Common myeloid progenitor, CD34-positive (primary cell): ENCODE measurements at regions of chr11 and their contacts with region 1.

Region 1: GRCh38 chr11:64304316-64305072 is 830 bp upstream of the ESRRA start:
- DNase-seq: peak; percentile 90 to 94 (median 91)
- H3K4me3 ChIP-seq: peak overlapping the region; percentile 52 to 92 (median 78)
- H3K27ac ChIP-seq: peak overlapping the region; percentile 40 to 82
- H3K4me1 ChIP-seq: peaks cover 7 to 44% (median 40%) of the 10 kb centered on the region in 4 experiments
- H3K27me3 ChIP-seq: peaks cover 0 to 20% (median 13%) of the 10 kb centered on the region in 5 experiments

Region 2: GRCh38 chr11:63993993-63994392 is 310.5 kb before region 1 on chr11:
- CTCF ChIA-PET with region 1: no interaction called
- POLR2A ChIA-PET with region 1: no interaction called
- DNase-seq: no peak
- H3K4me3 ChIP-seq: no peak overlapping the region
- H3K27ac ChIP-seq: no peak overlapping the region
- H3K4me1 ChIP-seq: peaks cover 0 to 12% (median 7%) of the 10 kb centered on the region in 4 experiments
- H3K27me3 ChIP-seq: peaks cover 0 to 12% (median 0%) of the 10 kb centered on the region in 5 experiments

Region 3: GRCh38 chr11:64131683-64132190 is 172.8 kb before region 1 on chr11:
- CTCF ChIA-PET with region 1: no interaction called
- POLR2A ChIA-PET with region 1: no interaction called
- DNase-seq: peak; percentile 31 to 86 (median 84)
- H3K4me3 ChIP-seq: peak overlapping the region in 3 of 7 experiments; percentile 1 to 28 (median 6)
- H3K27ac ChIP-seq: no peak overlapping the region
- H3K4me1 ChIP-seq: peaks cover 0 to 36% (median 24%) of the 10 kb centered on the region in 4 experiments
- H3K27me3 ChIP-seq: no peaks in the 10 kb centered on the region

Region 4: DNA sequence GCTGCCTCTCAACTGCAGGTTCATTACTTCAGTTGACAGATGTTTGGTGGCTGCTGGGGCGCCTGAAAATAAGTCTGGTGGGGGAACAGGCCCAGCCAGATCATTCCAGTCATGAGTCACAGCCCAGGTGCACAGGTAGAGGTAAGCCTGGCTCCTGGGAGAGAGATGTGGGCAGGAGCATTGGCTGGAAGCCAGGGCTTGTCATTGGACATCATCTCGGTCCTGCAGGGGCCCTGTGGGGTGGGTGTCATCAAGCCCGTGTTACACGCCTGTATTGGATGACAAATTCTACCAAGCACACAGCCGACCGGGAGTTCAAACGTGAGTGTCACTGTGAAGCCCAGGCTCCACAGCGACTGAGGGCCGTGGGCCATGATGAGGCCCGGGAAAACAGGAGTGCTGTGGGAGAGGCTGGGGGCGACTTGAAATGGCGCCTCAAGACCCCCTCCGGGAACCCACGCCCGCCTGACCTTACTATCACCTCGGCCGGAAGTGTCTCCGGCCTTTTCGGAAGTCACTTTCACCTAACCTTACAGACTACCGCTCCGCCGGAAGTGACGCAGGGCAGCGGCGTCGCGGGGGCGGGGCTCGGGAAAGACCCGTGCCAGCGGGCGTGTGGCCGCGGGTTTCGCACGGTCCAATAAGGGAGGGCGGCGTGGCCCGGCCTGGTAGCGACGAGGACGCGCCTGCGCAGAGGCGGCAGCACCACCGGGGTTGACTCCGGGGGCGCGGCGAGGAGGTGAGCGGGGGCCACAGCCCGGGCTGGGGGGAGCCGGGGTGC is 63.9 kb before region 1 on chr11 and contains the start of gene FKBP2:
- CTCF ChIA-PET with region 1: interaction called, 11 read pairs
- POLR2A ChIA-PET with region 1: no interaction called
- DNase-seq: peak; percentile 96 to 98 (median 98)
- H3K4me3 ChIP-seq: peak within 1 kb of the TSS; percentile 69 to 91 (median 85)
- H3K27ac ChIP-seq: peak within 1 kb of the TSS; percentile 96 to 97
- H3K4me1 ChIP-seq: peaks cover 4 to 56% (median 49%) of the 10 kb centered on the region in 4 experiments
- H3K27me3 ChIP-seq: no peaks in the 10 kb centered on the region

Region 5: DNA sequence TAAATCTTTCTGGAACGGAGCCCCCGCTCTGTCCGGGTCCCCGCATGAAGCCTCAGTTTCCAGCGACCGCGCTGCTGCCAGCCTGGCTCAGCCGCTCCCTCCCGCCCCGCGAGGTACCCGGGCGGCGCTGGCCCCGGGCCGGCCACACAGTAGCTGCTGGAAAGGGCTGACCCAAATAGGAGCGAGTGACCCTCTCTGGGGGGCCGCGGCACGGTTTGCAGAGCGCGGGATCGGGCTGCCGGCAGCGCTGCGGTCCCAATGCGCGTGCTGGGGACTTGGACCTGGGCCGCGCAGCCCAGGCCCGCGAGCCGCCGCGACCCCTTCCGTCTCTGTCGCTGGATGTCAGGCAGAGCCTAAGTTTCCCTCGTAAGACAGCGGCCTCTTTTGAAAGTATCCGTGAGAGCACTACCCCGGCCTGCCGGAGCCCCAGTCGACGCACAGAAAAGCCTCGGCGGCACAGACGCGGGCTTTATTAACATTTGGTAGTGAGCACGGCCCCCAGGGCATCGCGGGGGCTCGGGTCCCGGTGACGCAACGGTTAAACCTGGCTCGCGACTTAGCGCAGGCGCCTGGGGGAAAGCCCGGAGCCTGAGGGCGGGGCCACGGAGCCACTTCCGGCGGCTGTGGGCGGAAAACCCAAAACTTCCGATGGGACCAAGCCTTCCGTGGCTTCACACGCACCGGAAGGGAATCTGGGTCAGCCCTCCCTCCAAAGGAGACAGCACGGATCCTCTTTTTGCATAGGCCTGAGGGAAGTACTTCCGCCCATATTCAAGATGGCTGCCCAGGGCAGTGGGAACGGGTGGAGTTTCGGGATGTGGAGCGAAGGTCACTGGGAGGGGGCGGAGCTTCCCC is 34.9 kb before region 1 on chr11:
- CTCF ChIA-PET with region 1: interaction called, 75 read pairs
- POLR2A ChIA-PET with region 1: interaction called, 12 read pairs
- DNase-seq: peak; percentile 98 to 99 (median 99)
- H3K4me3 ChIP-seq: peak overlapping the region; percentile 76 to 94 (median 86)
- H3K27ac ChIP-seq: peak overlapping the region; percentile 88 to 96
- H3K4me1 ChIP-seq: peaks cover 4 to 51% (median 41%) of the 10 kb centered on the region in 4 experiments
- H3K27me3 ChIP-seq: no peaks in the 10 kb centered on the region

Region 6: GRCh38 chr11:64317957-64318693 is 13.6 kb after region 1 on chr11 and contains the start of gene PRDX5:
- CTCF ChIA-PET with region 1: interaction called, 13 read pairs
- POLR2A ChIA-PET with region 1: interaction called, 14 read pairs
- DNase-seq: peak; percentile 95 to 98 (median 98)
- H3K4me3 ChIP-seq: peak within 1 kb of the TSS; percentile 64 to 91 (median 86)
- H3K27ac ChIP-seq: peak within 1 kb of the TSS; percentile 87 to 95
- H3K4me1 ChIP-seq: peaks cover 0 to 29% (median 27%) of the 10 kb centered on the region in 4 experiments
- H3K27me3 ChIP-seq: no peaks in the 10 kb centered on the region

Region 7: DNA sequence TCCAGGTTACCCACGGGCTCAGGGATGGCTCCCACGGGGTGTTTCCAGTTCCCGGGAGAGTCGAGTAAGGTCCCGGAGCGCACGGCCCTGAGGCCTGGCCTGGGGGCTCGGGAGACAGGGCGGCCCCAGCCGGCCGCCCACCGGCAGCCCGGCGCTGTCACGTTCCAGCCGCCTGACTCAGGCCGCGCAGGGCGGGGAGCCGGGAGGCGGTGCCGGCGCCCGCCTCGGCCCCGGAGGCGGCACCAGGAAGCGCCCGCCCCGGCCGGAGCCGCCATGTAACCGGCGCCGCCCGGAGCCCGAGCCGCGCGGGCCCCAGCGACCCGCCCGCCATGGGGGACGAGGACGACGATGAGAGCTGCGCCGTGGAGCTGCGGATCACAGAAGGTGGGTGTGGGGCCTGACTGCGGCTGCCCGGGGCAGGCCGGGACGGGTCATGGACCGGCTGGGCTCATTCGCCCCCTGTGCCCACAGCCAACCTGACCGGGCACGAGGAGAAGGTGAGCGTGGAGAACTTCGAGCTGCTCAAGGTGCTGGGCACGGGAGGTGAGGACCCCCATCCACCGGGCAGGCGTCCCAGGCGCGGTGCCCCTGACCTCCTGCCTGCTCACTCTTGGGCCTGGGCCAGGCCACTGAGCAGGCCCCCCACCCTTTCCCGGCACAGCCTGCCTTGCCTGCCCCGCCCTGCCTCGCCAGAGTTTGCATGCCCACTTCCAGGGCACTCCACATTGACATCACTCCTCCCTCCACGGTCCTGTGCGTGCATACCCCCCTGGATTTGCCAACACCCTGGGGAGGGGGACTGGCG is 54.6 kb after region 1 on chr11 and contains the start of gene RPS6KA4:
- CTCF ChIA-PET with region 1: interaction called, 29 read pairs
- POLR2A ChIA-PET with region 1: interaction called, 4 read pairs
- DNase-seq: peak in 2 of 3 donors; percentile 48 to 63
- H3K4me3 ChIP-seq: peak within 1 kb of the TSS; percentile 52 to 86 (median 75)
- H3K27ac ChIP-seq: peak within 1 kb of the TSS in 1 of 2 experiments; percentile 70
- H3K4me1 ChIP-seq: peaks cover 2 to 82% (median 51%) of the 10 kb centered on the region in 4 experiments
- H3K27me3 ChIP-seq: no peaks in the 10 kb centered on the region

Region 8: GRCh38 chr11:64472593-64473455 is 168.3 kb after region 1 on chr11:
- CTCF ChIA-PET with region 1: no interaction called
- POLR2A ChIA-PET with region 1: no interaction called
- DNase-seq: no peak
- H3K4me3 ChIP-seq: no peak overlapping the region
- H3K27ac ChIP-seq: no peak overlapping the region
- H3K4me1 ChIP-seq: no peaks in the 10 kb centered on the region
- H3K27me3 ChIP-seq: peaks cover 0 to 4% (median 0%) of the 10 kb centered on the region in 5 experiments